AG04450 (cell line): ENCODE measurements at regions of chr3 and their contacts with region 1.

Region 1: DNA sequence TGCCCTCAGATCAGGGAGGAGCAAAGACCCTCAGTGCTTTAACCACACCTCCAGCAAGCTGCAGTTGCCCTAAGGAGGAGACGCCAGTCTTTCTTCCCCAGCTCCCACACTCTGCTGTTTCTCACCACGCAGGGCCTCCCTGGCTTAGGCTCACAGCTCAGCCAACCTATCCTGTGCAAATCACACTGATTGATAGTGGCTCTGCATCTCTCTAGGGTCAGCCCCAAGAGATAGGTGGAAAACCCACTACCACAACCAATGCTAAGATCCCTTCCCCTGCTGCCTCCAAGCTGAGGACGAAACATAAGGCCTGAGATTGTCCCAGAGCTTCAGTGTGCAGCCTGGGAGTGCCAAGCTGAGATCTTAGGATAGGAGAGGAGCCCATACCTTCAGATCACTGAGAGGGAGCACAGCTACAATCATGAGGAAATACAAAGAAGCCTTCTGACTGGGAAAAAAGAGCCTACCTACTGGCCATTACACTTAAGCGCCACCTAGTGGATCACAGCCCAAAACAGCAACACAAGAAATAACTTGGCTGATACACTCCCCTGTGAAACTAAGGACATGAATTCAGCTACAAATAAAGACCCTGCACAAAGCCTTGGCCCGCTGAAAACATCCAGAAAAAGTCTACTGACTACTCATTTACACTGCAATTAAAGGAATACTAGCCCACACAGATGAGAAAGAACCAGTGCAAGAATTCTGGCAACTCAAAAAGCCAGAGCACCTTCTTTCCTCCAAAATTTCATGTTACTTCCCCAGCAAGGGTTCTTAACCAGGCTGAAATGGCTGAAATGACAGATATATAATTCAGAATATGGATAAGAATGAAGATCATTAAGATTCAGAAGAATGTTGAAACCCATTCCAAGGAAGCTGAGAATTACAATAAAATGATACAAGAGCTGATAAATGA is 271.5 kb upstream of the DCBLD2 start:
- DNase-seq: peak; percentile 50
- H3K4me3 ChIP-seq: no peak overlapping the region
- H3K27ac ChIP-seq: no peak overlapping the region
- H3K27me3 ChIP-seq: no peaks in the 10 kb centered on the region
- CTCF ChIP-seq: peak; percentile 97

Region 2: GRCh38 chr3:98711426-98711825 is 461.6 kb before region 1 on chr3:
- CTCF ChIA-PET with region 1: no interaction called
- POLR2A ChIA-PET with region 1: no interaction called
- DNase-seq: no peak
- H3K4me3 ChIP-seq: no peak overlapping the region
- H3K27ac ChIP-seq: no peak overlapping the region
- H3K27me3 ChIP-seq: no peaks in the 10 kb centered on the region
- CTCF ChIP-seq: no peak

Region 3: DNA sequence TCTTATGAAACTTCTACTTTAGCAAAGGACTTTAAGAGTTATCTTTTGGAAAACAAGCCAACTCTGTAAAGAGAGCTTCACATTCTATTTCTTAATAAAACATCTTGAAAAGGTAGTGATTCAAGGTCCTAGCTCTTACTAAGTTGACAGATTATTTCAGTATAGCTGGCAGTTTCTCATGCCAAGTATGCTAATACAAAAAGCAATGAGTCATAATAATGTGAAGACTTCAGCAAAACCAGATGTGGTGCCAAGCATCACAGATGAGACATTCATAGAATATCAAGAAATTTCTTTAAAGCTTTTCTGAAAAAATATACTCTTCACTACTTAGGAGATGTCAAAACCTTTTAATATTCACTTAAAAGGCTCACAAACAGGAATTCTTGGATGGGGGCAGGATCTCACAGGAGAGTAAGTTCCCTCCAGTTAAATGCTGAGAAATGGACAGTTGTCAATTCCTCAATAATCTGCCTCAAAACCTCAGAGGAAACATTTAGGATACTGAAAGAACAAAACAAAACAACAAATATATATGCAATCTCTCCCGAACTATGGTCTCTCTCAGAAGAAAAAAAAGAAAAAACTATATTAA is 317.1 kb before region 1 on chr3:
- CTCF ChIA-PET with region 1: no interaction called
- POLR2A ChIA-PET with region 1: no interaction called
- DNase-seq: peak; percentile 58
- H3K4me3 ChIP-seq: no peak overlapping the region
- H3K27ac ChIP-seq: no peak overlapping the region
- H3K27me3 ChIP-seq: no peaks in the 10 kb centered on the region
- CTCF ChIP-seq: no peak

Region 4: DNA sequence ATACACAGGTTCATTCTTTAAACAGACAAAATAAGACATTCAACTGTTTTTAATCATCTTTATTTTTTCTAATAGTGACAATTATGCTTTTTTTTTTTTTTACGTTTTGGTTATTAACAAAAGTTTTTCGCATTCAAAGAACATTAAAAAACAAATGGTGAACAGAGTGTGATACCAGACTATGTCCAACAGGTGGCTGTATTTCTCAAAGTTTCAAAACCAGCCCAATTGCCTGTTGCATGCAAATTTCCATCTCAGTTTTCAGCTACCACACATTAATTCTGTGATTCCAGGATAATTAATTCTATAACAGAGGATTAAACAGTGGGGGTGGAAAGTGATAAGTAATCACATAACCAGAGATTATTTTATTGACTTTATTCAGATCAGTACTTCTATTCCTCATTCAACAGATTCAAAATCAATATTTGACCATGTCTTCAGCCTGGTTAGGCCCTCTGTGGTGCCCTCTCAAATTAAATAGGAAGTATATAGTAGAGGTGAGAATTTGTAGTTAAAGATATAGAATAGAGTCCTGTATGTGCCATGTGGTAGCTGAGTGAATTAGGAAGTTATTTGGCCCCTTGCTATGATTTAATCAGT is 149.3 kb before region 1 on chr3:
- CTCF ChIA-PET with region 1: interaction called, 87 read pairs
- POLR2A ChIA-PET with region 1: no interaction called
- DNase-seq: peak; percentile 27
- H3K4me3 ChIP-seq: no peak overlapping the region
- H3K27ac ChIP-seq: no peak overlapping the region
- H3K27me3 ChIP-seq: no peaks in the 10 kb centered on the region
- CTCF ChIP-seq: peak; percentile 71

Region 5: DNA sequence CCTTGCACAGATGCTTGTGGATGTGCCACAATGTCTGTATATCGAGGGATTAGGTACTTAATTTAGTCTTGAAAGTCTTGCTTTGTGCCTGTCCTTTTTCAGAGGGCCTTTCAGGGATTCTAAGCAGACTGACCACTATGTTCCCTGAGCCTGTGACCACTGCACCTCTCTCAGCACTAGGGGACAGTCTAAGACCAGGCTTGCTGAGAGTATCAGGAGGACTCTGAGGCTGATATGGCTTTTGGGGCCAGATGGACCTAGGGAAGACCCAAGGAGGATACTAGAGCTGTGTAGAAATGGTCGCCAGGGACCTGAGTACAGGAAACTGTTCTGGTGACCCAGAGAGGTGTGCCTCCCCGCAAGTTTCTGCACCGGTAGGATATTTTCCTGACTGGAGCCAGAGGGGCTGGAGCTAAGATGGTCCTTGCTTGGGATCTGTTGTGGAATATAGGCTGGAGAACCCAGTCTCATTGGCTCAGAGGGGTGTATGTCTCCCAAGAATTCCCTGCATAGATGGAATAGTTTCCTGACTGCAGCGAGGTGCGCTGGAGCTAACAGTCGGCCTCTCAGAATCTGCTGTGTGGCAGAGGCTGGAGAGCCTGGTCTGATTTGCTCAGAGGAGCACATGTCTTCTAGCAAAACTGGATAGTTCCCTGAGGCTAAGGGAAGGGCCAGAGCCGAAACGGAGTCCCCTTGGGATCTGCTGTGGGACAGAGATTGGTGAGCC is 58.3 kb before region 1 on chr3:
- CTCF ChIA-PET with region 1: interaction called, 15 read pairs
- POLR2A ChIA-PET with region 1: no interaction called
- DNase-seq: peak; percentile 16
- H3K4me3 ChIP-seq: no peak overlapping the region
- H3K27ac ChIP-seq: no peak overlapping the region
- H3K27me3 ChIP-seq: no peaks in the 10 kb centered on the region
- CTCF ChIP-seq: peak; percentile 91

Region 6: GRCh38 chr3:99159220-99159762 is 13.7 kb before region 1 on chr3:
- CTCF ChIA-PET with region 1: interaction called, 42 read pairs
- POLR2A ChIA-PET with region 1: no interaction called
- DNase-seq: no peak
- H3K4me3 ChIP-seq: no peak overlapping the region
- H3K27ac ChIP-seq: no peak overlapping the region
- H3K27me3 ChIP-seq: no peaks in the 10 kb centered on the region
- CTCF ChIP-seq: no peak

Region 7: DNA sequence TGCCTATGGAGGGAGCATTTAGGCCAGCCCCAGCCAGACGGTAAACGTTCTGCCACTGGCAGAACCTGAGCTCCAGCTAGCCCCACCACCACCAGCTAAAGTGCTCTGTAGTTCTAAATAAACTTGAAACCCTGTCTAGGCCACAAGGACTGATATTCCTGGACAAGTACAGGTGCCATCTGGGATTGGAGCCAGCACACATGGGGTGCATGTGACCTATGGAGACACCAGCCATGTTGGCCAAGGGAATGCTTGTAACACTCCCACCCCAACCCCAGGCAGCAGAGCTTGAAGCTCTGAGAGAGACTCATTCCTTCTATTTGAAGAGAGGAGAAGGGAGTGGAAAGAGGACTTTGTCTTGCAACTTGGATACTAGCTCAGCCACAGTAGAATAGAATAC is 13.0 kb after region 1 on chr3:
- CTCF ChIA-PET with region 1: interaction called, 19 read pairs
- POLR2A ChIA-PET with region 1: no interaction called
- DNase-seq: no peak
- H3K4me3 ChIP-seq: no peak overlapping the region
- H3K27ac ChIP-seq: no peak overlapping the region
- H3K27me3 ChIP-seq: no peaks in the 10 kb centered on the region
- CTCF ChIP-seq: no peak

Region 8: DNA sequence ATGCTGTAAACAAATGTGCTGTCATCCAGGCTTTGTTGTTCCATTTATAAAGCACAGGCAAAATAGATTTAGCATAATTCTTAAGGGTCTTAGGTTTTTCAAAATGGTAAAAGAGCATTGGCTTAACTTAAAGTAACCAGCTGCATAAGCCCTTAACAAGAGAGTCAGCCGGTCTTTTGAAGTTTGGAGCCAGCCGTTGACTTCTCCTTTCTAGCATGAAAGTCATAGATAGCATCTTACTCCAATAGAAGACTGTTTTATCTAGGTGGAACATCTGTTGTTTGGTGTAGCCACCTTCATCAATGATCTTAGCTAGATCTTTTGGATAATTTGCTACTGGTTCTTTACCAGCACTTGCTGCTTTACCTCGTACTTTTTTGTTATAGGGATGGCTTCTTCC is 26.0 kb after region 1 on chr3:
- CTCF ChIA-PET with region 1: interaction called, 11 read pairs
- POLR2A ChIA-PET with region 1: no interaction called
- DNase-seq: no peak
- H3K4me3 ChIP-seq: no peak overlapping the region
- H3K27ac ChIP-seq: no peak overlapping the region
- H3K27me3 ChIP-seq: no peaks in the 10 kb centered on the region
- CTCF ChIP-seq: no peak

Region 9: DNA sequence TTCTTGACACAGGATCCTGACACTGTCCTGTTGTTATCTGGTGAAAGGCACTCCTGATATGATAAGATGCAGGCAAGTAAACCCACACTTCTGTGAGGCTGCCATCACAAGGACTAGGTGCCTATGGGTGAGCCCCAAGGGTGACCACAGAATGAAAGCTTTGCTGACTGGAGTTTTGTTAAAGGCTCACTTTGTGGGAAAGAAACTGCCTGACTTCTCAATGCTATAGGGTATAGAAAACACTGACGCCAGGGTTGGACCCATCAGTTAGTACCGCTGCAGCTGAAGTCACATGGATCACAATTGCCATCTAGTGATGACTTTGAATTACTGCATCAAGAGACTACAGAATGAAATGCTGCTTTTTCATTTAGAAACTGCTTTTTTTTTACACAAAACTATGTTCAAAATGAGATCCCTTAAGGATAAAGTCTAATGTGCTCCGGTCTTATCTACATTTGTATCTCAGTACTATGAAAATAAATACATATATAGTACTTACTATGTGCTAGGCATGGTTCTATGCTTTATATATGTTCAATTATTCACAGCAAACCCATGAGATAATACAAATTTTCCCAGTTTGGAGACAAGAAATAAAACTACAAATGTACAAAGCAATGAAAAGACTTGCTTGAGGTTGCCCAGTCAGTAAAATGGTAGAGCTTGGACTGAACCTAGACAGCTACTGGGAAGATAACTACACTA is 580.4 kb after region 1 on chr3:
- CTCF ChIA-PET with region 1: interaction called, 12 read pairs
- POLR2A ChIA-PET with region 1: no interaction called
- DNase-seq: peak; percentile 63
- H3K4me3 ChIP-seq: no peak overlapping the region
- H3K27ac ChIP-seq: no peak overlapping the region
- H3K27me3 ChIP-seq: no peaks in the 10 kb centered on the region
- CTCF ChIP-seq: peak; percentile 84